Heart left ventricle (tissue), 16 donors: ENCODE measurements at regions of chr17 and their contacts with region 1.

Region 1: GRCh38 chr17:61128661-61129115 is 271.0 kb upstream of the TBX2 start:
- DNase-seq: peak in 3 of 5 donors; percentile 15 to 25 (median 23)
- ATAC-seq: peak in 3 of 4 donors; percentile 49 to 72 (median 69)
- H3K4me3 ChIP-seq: no peak overlapping the region
- H3K27ac ChIP-seq: peak overlapping the region in 10 of 12 donors; percentile 40 to 69 (median 57)
- H3K4me1 ChIP-seq: peaks cover 0 to 33% (median 10%) of the 10 kb centered on the region in 12 donors
- H3K27me3 ChIP-seq: no peaks in the 10 kb centered on the region
- CTCF ChIP-seq: no peak
- POLR2A ChIP-seq: no peak

Region 2: DNA sequence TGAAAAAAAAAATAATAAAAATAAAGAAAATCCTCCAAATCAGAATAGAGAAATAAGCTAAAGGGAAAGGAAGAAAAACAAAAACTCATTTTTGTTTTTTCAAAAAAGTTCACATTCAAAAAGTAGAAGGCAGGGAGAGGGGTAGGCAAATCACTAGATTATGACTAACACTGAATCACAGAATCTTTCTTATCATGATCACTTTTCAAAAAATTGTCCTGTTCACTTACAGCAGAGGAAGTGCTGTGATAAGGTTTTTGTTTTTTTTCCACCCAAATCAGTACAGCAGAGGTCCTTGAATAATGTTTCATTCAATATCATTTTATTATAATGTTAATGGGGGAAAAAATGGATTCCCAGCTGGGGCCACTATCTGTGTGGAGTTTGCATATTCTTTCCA is 872.5 kb before region 1 on chr17:
- intact Hi-C with region 1: no loop called
- DNase-seq: no peak
- ATAC-seq: no peak
- H3K4me3 ChIP-seq: no peak overlapping the region
- H3K27ac ChIP-seq: no peak overlapping the region
- H3K4me1 ChIP-seq: no peaks in the 10 kb centered on the region
- H3K27me3 ChIP-seq: no peaks in the 10 kb centered on the region
- CTCF ChIP-seq: no peak
- POLR2A ChIP-seq: no peak

Region 3: DNA sequence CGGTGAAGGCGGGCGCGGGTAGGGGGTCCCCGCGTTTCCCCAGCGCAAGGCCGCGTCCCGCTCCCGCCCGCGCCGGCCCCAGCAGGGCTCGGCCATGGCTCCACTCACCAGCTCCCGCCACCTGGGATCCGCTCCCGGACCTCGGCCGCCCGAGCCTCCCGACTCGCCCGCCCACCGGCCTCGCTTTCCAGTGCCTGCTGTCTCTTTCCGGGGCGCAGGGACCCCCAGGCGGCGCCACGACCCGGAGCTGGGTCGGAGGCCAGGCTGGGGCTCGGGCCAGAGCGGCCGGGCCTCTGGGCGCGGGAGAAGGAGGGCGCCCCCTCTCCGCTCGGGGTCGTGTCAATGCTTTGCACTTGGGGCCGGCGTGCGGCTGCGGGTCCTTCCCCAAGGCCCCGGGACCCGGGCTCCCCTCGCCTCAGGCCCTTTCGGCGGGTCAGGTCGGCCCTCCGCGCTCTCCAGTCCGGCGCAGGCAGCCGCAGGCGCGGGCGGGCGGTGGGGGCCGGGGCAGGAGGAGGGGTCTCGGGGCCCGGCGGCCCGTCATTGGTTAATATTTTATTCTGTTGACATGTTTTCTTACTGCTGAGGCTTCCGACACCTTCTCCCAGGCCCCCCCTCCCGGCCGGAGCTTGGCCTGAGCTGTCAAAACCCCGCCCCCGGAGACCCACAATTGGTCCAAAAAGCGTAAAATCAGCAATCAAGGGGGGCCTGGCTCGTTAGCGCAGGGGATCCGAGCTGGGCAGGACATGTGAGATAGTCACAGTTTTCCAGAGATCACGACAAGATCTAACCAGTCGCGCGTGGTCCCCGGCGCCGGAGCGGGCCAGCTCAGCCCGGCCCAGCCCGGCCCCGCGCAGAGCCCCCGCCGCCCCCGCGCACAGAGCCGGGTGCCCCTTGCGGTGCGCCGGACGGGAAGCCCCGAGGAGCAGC is 270.7 kb after region 1 on chr17 and contains the start of gene TBX2:
- intact Hi-C with region 1: loop called in 4 of 10 experiments (anchors 5 to 10 kb)
- DNase-seq: peak; percentile 84 to 90 (median 87)
- ATAC-seq: peak; percentile 47 to 75 (median 60)
- H3K4me3 ChIP-seq: peak within 1 kb of the TSS; percentile 51 to 84 (median 65)
- H3K27ac ChIP-seq: peak within 1 kb of the TSS; percentile 47 to 88 (median 78)
- H3K4me1 ChIP-seq: peaks cover 0 to 71% (median 34%) of the 10 kb centered on the region in 12 donors
- H3K27me3 ChIP-seq: peaks cover 37 to 90% (median 80%) of the 10 kb centered on the region in 9 donors
- CTCF ChIP-seq: peak in 1 of 12 donors; percentile 17
- POLR2A ChIP-seq: peak in 1 of 2 donors; percentile 50
- total RNA-seq, gene TBX2: 7.0 to 23.0 (median 13.6) TPM